CD8-positive, alpha-beta T cell (primary cell): ENCODE measurements at regions of chr3 and their contacts with region 1.

Region 1: GRCh38 chr3:60010781-60011180 is 961.0 kb upstream of the CFAP20DC start:
- DNase-seq: peak; percentile 23 to 93 (median 64)
- ATAC-seq: peak; percentile 96
- H3K4me3 ChIP-seq: peak overlapping the region; percentile 31 to 32
- H3K4me3 Mint-ChIP-seq: peak overlapping the region; percentile 85
- H3K27ac ChIP-seq: peak overlapping the region; percentile 66 to 86
- H3K27ac Mint-ChIP-seq: peak overlapping the region; percentile 99
- H3K4me1 ChIP-seq: peaks cover 85% of the 10 kb centered on the region
- H3K4me1 Mint-ChIP-seq: peaks cover 89% of the 10 kb centered on the region
- H3K27me3 ChIP-seq: no peaks in the 10 kb centered on the region
- H3K27me3 Mint-ChIP-seq: no peaks in the 10 kb centered on the region
- CTCF ChIP-seq: no peak

Region 2: GRCh38 chr3:59450946-59451763 is 559.6 kb before region 1 on chr3:
- CTCF ChIA-PET with region 1: no interaction called
- POLR2A ChIA-PET with region 1: no interaction called
- intact Hi-C with region 1: loop called in 1 of 2 experiments (anchors 5 kb)
- DNase-seq: peak; percentile 26 to 90 (median 58)
- ATAC-seq: peak; percentile 90
- H3K4me3 ChIP-seq: peak overlapping the region in 1 of 2 experiments; percentile 22
- H3K4me3 Mint-ChIP-seq: peak overlapping the region; percentile 72
- H3K27ac ChIP-seq: peak overlapping the region; percentile 73 to 84
- H3K27ac Mint-ChIP-seq: peak overlapping the region; percentile 96
- H3K4me1 ChIP-seq: peaks cover 56% of the 10 kb centered on the region
- H3K4me1 Mint-ChIP-seq: peaks cover 81% of the 10 kb centered on the region
- H3K27me3 ChIP-seq: no peaks in the 10 kb centered on the region
- H3K27me3 Mint-ChIP-seq: no peaks in the 10 kb centered on the region
- CTCF ChIP-seq: no peak

Region 3: DNA sequence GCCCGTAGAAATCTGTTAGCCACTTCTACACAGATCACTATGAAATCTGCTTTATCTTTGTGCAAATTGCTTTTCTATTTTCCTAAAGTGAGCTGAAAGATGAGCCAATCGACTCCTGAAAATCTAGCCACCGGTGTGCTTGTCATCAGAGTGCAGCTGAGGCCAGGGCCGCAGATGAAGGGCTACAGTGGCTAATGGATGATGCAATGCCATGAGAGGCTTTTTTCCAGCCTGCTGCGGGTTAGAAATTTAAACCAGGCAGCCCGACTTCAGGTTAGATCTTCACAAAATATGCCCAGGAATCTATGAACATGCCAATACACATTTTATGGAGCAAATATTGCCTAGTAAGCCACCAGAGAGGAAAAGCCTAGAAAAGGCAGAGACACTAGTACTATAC is 12.7 kb before region 1 on chr3:
- CTCF ChIA-PET with region 1: interaction called, 6 read pairs
- POLR2A ChIA-PET with region 1: interaction called, 12 read pairs
- intact Hi-C with region 1: loop called in 1 of 2 experiments (anchors 2 kb)
- DNase-seq: no peak
- ATAC-seq: no peak
- H3K4me3 ChIP-seq: no peak overlapping the region
- H3K4me3 Mint-ChIP-seq: no peak overlapping the region
- H3K27ac ChIP-seq: no peak overlapping the region
- H3K27ac Mint-ChIP-seq: no peak overlapping the region
- H3K4me1 ChIP-seq: peaks cover 51% of the 10 kb centered on the region
- H3K4me1 Mint-ChIP-seq: peaks cover 65% of the 10 kb centered on the region
- H3K27me3 ChIP-seq: no peaks in the 10 kb centered on the region
- H3K27me3 Mint-ChIP-seq: no peaks in the 10 kb centered on the region
- CTCF ChIP-seq: no peak

Region 4: GRCh38 chr3:60033901-60034453 is 23.2 kb after region 1 on chr3:
- CTCF ChIA-PET with region 1: no interaction called
- POLR2A ChIA-PET with region 1: interaction called, 7 read pairs
- intact Hi-C with region 1: loop called in 1 of 2 experiments (anchors 2 kb)
- DNase-seq: no peak
- ATAC-seq: no peak
- H3K4me3 ChIP-seq: no peak overlapping the region
- H3K4me3 Mint-ChIP-seq: no peak overlapping the region
- H3K27ac ChIP-seq: no peak overlapping the region
- H3K27ac Mint-ChIP-seq: no peak overlapping the region
- H3K4me1 ChIP-seq: no peaks in the 10 kb centered on the region
- H3K4me1 Mint-ChIP-seq: peaks cover 8% of the 10 kb centered on the region
- H3K27me3 ChIP-seq: no peaks in the 10 kb centered on the region
- H3K27me3 Mint-ChIP-seq: no peaks in the 10 kb centered on the region
- CTCF ChIP-seq: no peak

Region 5: GRCh38 chr3:60081381-60082095 is 70.8 kb after region 1 on chr3:
- CTCF ChIA-PET with region 1: interaction called, 4 read pairs
- POLR2A ChIA-PET with region 1: interaction called, 5 read pairs
- intact Hi-C with region 1: loop called in 1 of 2 experiments (anchors 5 kb)
- DNase-seq: peak in 2 of 9 experiments; percentile 12 to 52
- ATAC-seq: peak; percentile 52
- H3K4me3 ChIP-seq: no peak overlapping the region
- H3K4me3 Mint-ChIP-seq: peak overlapping the region; percentile 46
- H3K27ac ChIP-seq: no peak overlapping the region
- H3K27ac Mint-ChIP-seq: peak overlapping the region; percentile 85
- H3K4me1 ChIP-seq: peaks cover 41% of the 10 kb centered on the region
- H3K4me1 Mint-ChIP-seq: peaks cover 52% of the 10 kb centered on the region
- H3K27me3 ChIP-seq: no peaks in the 10 kb centered on the region
- H3K27me3 Mint-ChIP-seq: no peaks in the 10 kb centered on the region
- CTCF ChIP-seq: no peak

Region 6: DNA sequence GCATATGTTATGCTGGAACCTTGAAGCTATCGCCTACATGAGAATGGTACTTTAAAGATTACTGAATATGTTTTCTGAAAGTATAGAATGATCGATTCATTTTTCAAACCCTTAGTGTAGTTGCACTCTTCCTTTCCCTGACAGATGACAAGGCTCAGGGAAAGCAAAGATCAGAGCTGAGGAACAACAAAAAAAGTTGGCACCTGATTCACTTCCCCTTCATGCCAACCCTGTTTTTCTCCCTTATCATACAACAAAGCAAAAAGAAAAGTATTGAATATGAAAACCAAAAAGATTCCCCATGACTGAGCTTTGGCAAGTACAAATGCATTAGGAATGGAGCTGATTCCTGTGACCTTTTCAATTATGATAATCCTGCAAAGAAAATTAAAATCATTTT is 227.8 kb after region 1 on chr3:
- CTCF ChIA-PET with region 1: no interaction called
- POLR2A ChIA-PET with region 1: no interaction called
- intact Hi-C with region 1: no loop called
- DNase-seq: no peak
- ATAC-seq: no peak
- H3K4me3 ChIP-seq: no peak overlapping the region
- H3K4me3 Mint-ChIP-seq: no peak overlapping the region
- H3K27ac ChIP-seq: no peak overlapping the region
- H3K27ac Mint-ChIP-seq: no peak overlapping the region
- H3K4me1 ChIP-seq: no peaks in the 10 kb centered on the region
- H3K4me1 Mint-ChIP-seq: peaks cover 3% of the 10 kb centered on the region
- H3K27me3 ChIP-seq: no peaks in the 10 kb centered on the region
- H3K27me3 Mint-ChIP-seq: no peaks in the 10 kb centered on the region
- CTCF ChIP-seq: no peak